ENCODE measurements at regions of chr12 and their contacts with region 1.

Region 1: DNA sequence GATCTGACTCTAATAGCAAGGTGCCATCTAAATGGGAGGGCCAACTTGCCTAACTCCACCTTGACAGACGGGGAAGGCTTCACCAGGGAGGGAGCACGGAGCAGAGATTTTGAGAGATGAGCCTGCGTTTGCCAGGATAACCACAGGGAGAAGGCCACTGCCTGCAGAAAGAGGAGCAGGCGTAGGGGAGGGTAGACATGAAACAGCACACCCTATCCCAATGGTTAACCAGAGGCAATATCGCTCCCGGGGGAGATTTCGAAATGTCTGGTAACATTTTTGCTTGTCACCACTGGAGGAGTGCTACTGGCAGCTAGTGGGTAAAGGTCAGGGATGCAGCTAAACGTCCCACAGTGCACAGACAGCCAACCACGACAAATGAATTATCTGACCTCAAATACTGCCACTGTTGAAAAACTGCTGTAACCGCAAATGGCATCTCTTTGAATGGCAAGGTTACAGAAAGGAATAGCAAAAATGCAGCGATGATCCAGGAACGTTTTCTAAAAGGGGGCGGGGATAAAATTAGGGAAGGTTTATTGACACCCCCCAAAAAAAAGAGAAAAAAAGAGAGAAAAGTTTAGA is 126.0 kb upstream of the ATF7IP start:
- DNase-seq: no peak
- H3K4me3 ChIP-seq: peak overlapping the region in 2 of 3 experiments; percentile 26 to 48
- H3K27ac ChIP-seq: peak overlapping the region; percentile 66
- H3K4me1 ChIP-seq: peaks cover 16% of the 10 kb centered on the region
- H3K27me3 ChIP-seq: no peaks in the 10 kb centered on the region
- CTCF ChIP-seq: peak in 2 of 3 experiments; percentile 20 to 24

Region 2: GRCh38 chr12:14193639-14194038 is 45.8 kb before region 1 on chr12:
- dilution Hi-C with region 1: no loop called
- DNase-seq: no peak
- H3K4me3 ChIP-seq: no peak overlapping the region
- H3K27ac ChIP-seq: no peak overlapping the region
- H3K4me1 ChIP-seq: no peaks in the 10 kb centered on the region
- H3K27me3 ChIP-seq: no peaks in the 10 kb centered on the region
- CTCF ChIP-seq: no peak

Region 3: GRCh38 chr12:14454098-14454907 is 214.9 kb after region 1 on chr12:
- dilution Hi-C with region 1: loop called (anchors 10 kb)
- DNase-seq: peak; percentile 30
- H3K4me3 ChIP-seq: no peak overlapping the region
- H3K27ac ChIP-seq: no peak overlapping the region
- H3K4me1 ChIP-seq: peaks cover 3% of the 10 kb centered on the region
- H3K27me3 ChIP-seq: no peaks in the 10 kb centered on the region
- CTCF ChIP-seq: peak; percentile 63 to 92 (median 91)

Measured in keratinocyte (primary cell).